ENCODE measurements at regions of chr1 and their contacts with region 1.

Region 1: GRCh38 chr1:90246069-90246468 is 251.2 kb downstream of the ZNF326 start:
- DNase-seq: no peak
- ATAC-seq: no peak
- H3K4me3 ChIP-seq: no peak overlapping the region
- H3K27ac ChIP-seq: no peak overlapping the region
- H3K4me1 ChIP-seq: no peaks in the 10 kb centered on the region
- H3K27me3 ChIP-seq: no peaks in the 10 kb centered on the region
- CTCF ChIP-seq: no peak
- EP300 ChIP-seq: no peak
- POLR2A ChIP-seq: no peak
- RAD21 ChIP-seq: no peak

Region 2: DNA sequence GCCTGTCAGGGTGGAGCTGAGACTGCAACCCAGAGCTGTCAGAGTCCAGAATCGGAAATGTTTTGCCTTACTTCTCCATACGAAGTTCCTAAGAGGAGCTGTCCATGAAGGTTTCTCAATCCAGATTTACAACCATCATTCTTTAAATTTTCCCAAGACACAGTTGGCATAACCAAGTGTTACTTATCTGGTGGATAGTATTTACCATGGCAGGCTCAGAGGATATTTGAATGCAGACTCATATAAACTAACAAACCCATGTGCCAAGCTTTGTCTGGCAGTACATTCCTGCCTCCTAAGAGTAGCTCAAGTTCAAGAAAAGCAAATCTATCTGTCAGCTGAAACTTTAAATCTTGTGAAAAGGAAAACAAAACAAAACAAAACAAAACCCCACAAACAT is 16.7 kb after region 1 on chr1:
- CTCF ChIA-PET with region 1: interaction called, 5 read pairs
- POLR2A ChIA-PET with region 1: no interaction called
- RAD21 ChIA-PET with region 1: no interaction called
- SMC1A ChIA-PET with region 1: interaction called, 10 read pairs
- in situ Hi-C with region 1: no loop called
- intact Hi-C with region 1: no loop called
- DNase-seq: no peak
- ATAC-seq: no peak
- H3K4me3 ChIP-seq: no peak overlapping the region
- H3K27ac ChIP-seq: no peak overlapping the region
- H3K4me1 ChIP-seq: no peaks in the 10 kb centered on the region
- H3K27me3 ChIP-seq: no peaks in the 10 kb centered on the region; a peak in 1 of 4 replicates
- CTCF ChIP-seq: no peak
- EP300 ChIP-seq: no peak
- POLR2A ChIP-seq: no peak
- RAD21 ChIP-seq: no peak

Region 3: DNA sequence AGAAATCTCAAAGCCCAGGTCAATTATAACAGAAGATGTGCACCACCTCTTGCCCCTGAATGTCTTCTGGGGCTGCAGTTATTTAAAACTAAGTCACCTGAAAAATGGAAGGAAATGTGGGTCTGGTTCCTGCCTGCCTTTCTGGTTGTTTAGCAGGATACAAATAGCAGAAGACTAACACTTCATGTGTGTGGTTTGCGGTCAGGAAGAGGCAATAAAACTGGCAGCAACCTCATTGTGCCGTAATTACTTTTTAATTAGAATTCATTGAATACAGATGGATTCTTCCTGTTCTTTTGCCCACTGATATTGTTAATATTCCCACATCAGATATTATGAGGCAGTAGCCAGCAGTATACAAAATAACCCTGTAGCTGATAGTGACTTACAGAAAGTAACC is 94.5 kb after region 1 on chr1:
- CTCF ChIA-PET with region 1: no interaction called
- POLR2A ChIA-PET with region 1: no interaction called
- RAD21 ChIA-PET with region 1: no interaction called
- SMC1A ChIA-PET with region 1: no interaction called
- in situ Hi-C with region 1: no loop called
- intact Hi-C with region 1: no loop called
- DNase-seq: no peak
- ATAC-seq: peak; percentile 28; the same call in 2 of the 3 replicates
- H3K4me3 ChIP-seq: no peak overlapping the region
- H3K27ac ChIP-seq: no peak overlapping the region
- H3K4me1 ChIP-seq: 0 out of 2 replicates have a peak, but pooled peaks cover 3% of the 10 kb centered on the region
- H3K27me3 ChIP-seq: no peaks in the 10 kb centered on the region
- CTCF ChIP-seq: no peak
- EP300 ChIP-seq: no peak
- POLR2A ChIP-seq: no peak
- RAD21 ChIP-seq: no peak